Pancreas (tissue), 10 donors: ENCODE measurements at regions of chr3 and their contacts with region 1.

Region 1: GRCh38 chr3:113736548-113737089 is 9.4 kb downstream of the NAA50 start:
- DNase-seq: no peak
- ATAC-seq: peak; percentile 75 to 96 (median 89)
- H3K4me3 ChIP-seq: no peak overlapping the region
- H3K27ac ChIP-seq: no peak overlapping the region
- H3K4me1 ChIP-seq: peaks cover 0 to 12% (median 11%) of the 10 kb centered on the region in 3 donors
- H3K27me3 ChIP-seq: no peaks in the 10 kb centered on the region
- CTCF ChIP-seq: peak in 3 of 4 donors; percentile 36 to 43 (median 37)

Region 2: DNA sequence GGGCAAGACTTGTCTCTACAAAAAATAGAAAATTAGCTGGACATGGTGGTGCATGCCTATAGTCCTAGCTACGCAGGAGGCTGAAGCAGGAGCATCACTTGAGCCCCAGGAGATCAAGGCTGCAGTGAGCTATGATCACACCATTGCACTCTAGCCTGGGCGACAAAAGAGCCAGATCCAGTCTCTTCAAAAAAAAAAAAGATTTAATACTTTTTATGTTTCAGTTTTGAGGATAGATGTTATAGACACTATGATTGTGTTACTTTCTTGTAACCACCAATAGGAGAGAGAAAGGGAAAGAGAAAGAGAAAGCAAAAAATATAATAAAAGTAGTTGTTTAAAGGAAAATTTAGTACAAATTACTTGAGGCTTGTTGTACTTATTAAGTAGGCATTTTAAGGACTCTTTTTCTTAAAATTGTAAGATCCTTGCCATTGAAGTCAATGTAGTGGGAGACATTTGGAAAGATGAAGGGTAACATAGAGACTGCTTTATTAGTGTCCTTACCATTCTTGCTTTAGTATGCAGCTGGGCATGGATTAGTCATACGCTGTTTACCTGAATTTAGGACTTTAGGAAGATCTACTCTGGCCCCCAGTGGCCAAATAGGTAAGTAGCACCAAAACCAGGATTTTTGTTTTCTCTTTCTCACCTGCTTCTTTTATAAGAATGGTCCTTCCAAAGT is 176.1 kb after region 1 on chr3:
- intact Hi-C with region 1: loop called in 1 of 3 experiments (anchors 10 kb)
- DNase-seq: peak in 3 of 6 donors; percentile 43 to 61 (median 44)
- ATAC-seq: peak; percentile 96 to 100 (median 100)
- H3K4me3 ChIP-seq: no peak overlapping the region
- H3K27ac ChIP-seq: peak overlapping the region in 2 of 4 donors; percentile 1 to 57
- H3K4me1 ChIP-seq: no peaks in the 10 kb centered on the region
- H3K27me3 ChIP-seq: no peaks in the 10 kb centered on the region
- CTCF ChIP-seq: peak; percentile 25 to 56 (median 42)